A549 (cell line): ENCODE measurements at regions of chr17 and their contacts with region 1.

Region 1: GRCh38 chr17:10754109-10754508 is 24.3 kb upstream of the TMEM220 start:
- DNase-seq: peak; percentile 72 to 80
- ATAC-seq: peak; percentile 67 to 86; a peak in 4 of 6 replicates
- H3K4me3 ChIP-seq: no peak overlapping the region
- H3K27ac ChIP-seq: no peak overlapping the region
- H3K4me1 ChIP-seq: no peaks in the 10 kb centered on the region
- CTCF ChIP-seq: peak; percentile 61
- EP300 ChIP-seq: no peak
- POLR2A ChIP-seq: no peak
- RAD21 ChIP-seq: peak; percentile 43 to 47; a peak in 4 of 5 replicates

Region 2: GRCh38 chr17:10652984-10653659 is 101.0 kb before region 1 on chr17:
- CTCF ChIA-PET with region 1: no interaction called
- POLR2A ChIA-PET with region 1: no interaction called
- DNase-seq: no peak
- ATAC-seq: no peak; a peak in 1 of 6 replicates
- H3K4me3 ChIP-seq: no peak overlapping the region
- H3K27ac ChIP-seq: no peak overlapping the region
- H3K4me1 ChIP-seq: no peaks in the 10 kb centered on the region
- CTCF ChIP-seq: no peak
- EP300 ChIP-seq: no peak
- POLR2A ChIP-seq: no peak
- RAD21 ChIP-seq: no peak

Region 3: GRCh38 chr17:10772425-10773380 is 18.6 kb after region 1 on chr17:
- CTCF ChIA-PET with region 1: interaction called, 12 read pairs
- POLR2A ChIA-PET with region 1: no interaction called
- DNase-seq: peak in 1 of 2 experiments; percentile 64
- ATAC-seq: peak in 1 of 2 experiments; percentile 58; a peak in 2 of 6 replicates
- H3K4me3 ChIP-seq: no peak overlapping the region
- H3K27ac ChIP-seq: no peak overlapping the region
- H3K4me1 ChIP-seq: no peaks in the 10 kb centered on the region
- CTCF ChIP-seq: peak; percentile 50
- EP300 ChIP-seq: no peak
- POLR2A ChIP-seq: no peak
- RAD21 ChIP-seq: peak; percentile 26 to 45; a peak in 3 of 5 replicates

Region 4: GRCh38 chr17:10844621-10845387 is 90.7 kb after region 1 on chr17:
- CTCF ChIA-PET with region 1: interaction called, 24 read pairs
- POLR2A ChIA-PET with region 1: no interaction called
- DNase-seq: peak; percentile 82 to 86
- ATAC-seq: peak; percentile 91 to 98
- H3K4me3 ChIP-seq: peak overlapping the region; percentile 38
- H3K27ac ChIP-seq: peak overlapping the region; percentile 34 to 77
- H3K4me1 ChIP-seq: no peaks in the 10 kb centered on the region
- CTCF ChIP-seq: peak; percentile 97
- EP300 ChIP-seq: no peak
- POLR2A ChIP-seq: no peak
- RAD21 ChIP-seq: peak; percentile 90 to 93